B cell (primary cell): ENCODE measurements at regions of chr1 and their contacts with region 1.

Region 1: DNA sequence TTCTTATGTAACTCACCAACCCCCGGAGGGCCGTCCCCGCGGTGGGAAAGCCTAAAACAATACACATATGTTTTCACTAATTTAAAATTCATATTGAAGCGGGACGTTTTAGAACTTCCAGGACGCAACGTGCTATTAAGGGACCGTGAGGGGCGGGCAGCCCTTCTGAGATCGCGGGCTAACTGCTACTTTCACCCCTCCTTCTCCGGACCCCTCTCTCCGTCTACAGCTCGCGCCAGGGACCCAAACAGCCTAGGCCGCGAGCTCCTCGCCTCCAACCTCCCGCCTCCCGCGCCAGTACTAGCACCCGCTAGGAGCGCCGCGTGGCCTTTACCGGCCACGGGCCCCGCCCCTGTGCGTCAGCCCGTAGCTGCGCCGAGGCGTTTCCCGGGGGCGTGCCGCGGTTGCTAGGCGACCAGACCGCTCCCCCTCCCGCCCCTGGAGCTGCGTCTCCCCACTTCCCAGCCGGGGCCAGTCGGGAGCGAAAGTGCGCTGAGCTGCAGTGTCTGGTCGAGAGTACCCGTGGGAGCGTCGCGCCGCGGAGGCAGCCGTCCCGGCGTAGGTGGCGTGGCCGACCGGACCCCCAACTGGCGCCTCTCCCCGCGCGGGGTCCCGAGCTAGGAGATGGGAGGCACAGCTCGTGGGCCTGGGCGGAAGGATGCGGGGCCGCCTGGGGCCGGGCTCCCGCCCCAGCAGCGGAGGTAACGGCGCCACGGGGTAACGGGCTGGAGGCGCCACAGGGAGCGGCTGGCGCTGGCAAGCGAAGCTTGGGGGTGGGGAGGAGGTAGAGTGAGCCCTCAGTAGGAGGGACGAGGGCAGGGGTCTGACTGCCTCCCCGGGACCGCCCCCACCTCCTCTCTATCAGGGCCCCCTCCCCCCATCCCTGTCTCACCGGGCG is at the start of gene DYRK3:
- DNase-seq: peak; percentile 89
- ATAC-seq: peak; percentile 93
- H3K4me3 ChIP-seq: peak within 1 kb of the TSS; percentile 54 to 77 (median 67)
- H3K4me3 Mint-ChIP-seq: peak within 1 kb of the TSS; percentile 92
- H3K27ac ChIP-seq: no peak within 1 kb of the TSS
- H3K27ac Mint-ChIP-seq: peak within 1 kb of the TSS; percentile 74
- H3K4me1 ChIP-seq: peaks cover 17 to 22% of the 10 kb centered on the region in 2 donors
- H3K4me1 Mint-ChIP-seq: peaks cover 29% of the 10 kb centered on the region
- H3K27me3 ChIP-seq: peaks cover 0 to 11% (median 7%) of the 10 kb centered on the region in 4 experiments
- H3K27me3 Mint-ChIP-seq: peaks cover 7% of the 10 kb centered on the region
- CTCF ChIP-seq: no peak
- total RNA-seq, gene DYRK3: 0.30 and 0.80 TPM in 2 replicates

Region 2: GRCh38 chr1:206612129-206612876 is 23.0 kb before region 1 on chr1 and contains the start of gene EIF2D:
- CTCF ChIA-PET with region 1: interaction called, 35 read pairs
- POLR2A ChIA-PET with region 1: interaction called, 5 read pairs
- intact Hi-C with region 1: loop called (anchors 1 kb)
- DNase-seq: peak; percentile 96
- ATAC-seq: peak; percentile 100
- H3K4me3 ChIP-seq: peak within 1 kb of the TSS; percentile 61 to 87 (median 86)
- H3K4me3 Mint-ChIP-seq: peak within 1 kb of the TSS; percentile 93
- H3K27ac ChIP-seq: peak within 1 kb of the TSS; percentile 70 to 93
- H3K27ac Mint-ChIP-seq: peak within 1 kb of the TSS; percentile 96
- H3K4me1 ChIP-seq: peaks cover 8 to 12% of the 10 kb centered on the region in 2 donors
- H3K4me1 Mint-ChIP-seq: peaks cover 19% of the 10 kb centered on the region
- H3K27me3 ChIP-seq: no peaks in the 10 kb centered on the region
- H3K27me3 Mint-ChIP-seq: no peaks in the 10 kb centered on the region
- CTCF ChIP-seq: peak; percentile 88
- total RNA-seq, gene EIF2D: 60.6 and 62.2 TPM in 2 replicates

Region 3: DNA sequence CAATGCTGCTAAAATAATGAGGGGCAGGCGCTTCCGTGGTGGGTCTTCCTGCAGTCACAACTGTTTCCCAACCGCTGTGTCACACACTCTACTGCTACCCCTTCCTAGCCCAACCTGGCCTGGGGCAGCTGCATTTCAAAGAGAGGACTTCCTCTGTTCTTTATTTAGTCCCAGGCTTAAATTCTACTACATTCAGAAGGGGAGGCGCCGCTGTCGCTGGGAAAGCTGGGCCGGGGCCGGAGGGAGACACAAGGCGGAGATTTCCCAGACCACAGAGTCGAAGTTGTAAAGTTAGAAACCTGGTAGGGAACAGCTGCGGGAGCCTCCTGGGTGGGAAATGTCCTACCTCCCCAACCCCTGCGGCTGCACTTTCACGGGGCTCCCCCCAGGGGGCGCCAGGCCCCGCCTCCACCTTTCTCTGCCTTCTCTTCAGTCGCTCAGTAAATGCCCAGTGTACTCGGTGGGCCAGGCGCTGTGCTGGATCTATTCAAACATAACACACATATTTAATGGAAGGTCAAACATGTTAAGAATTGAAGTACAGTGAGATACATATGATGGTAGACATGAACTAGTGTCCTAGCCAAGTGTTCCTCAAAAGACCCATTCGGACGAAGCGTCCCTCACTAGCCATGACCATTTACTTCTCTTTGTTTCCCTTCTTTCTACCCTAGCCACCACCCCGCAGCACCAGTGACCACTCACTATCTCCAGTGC is 23.1 kb after region 1 on chr1:
- CTCF ChIA-PET with region 1: interaction called, 215 read pairs
- POLR2A ChIA-PET with region 1: interaction called, 3 read pairs
- intact Hi-C with region 1: no loop called
- DNase-seq: peak; percentile 72
- ATAC-seq: peak; percentile 85
- H3K4me3 ChIP-seq: peak overlapping the region in 3 of 5 experiments; percentile 8 to 51 (median 12)
- H3K4me3 Mint-ChIP-seq: peak overlapping the region; percentile 49
- H3K27ac ChIP-seq: no peak overlapping the region
- H3K27ac Mint-ChIP-seq: peak overlapping the region; percentile 1
- H3K4me1 ChIP-seq: peaks cover 16 to 17% of the 10 kb centered on the region in 2 donors
- H3K4me1 Mint-ChIP-seq: peaks cover 21% of the 10 kb centered on the region
- H3K27me3 ChIP-seq: peaks cover 0 to 34% (median 11%) of the 10 kb centered on the region in 4 experiments
- H3K27me3 Mint-ChIP-seq: peaks cover 30% of the 10 kb centered on the region
- CTCF ChIP-seq: peak; percentile 96

Region 4: DNA sequence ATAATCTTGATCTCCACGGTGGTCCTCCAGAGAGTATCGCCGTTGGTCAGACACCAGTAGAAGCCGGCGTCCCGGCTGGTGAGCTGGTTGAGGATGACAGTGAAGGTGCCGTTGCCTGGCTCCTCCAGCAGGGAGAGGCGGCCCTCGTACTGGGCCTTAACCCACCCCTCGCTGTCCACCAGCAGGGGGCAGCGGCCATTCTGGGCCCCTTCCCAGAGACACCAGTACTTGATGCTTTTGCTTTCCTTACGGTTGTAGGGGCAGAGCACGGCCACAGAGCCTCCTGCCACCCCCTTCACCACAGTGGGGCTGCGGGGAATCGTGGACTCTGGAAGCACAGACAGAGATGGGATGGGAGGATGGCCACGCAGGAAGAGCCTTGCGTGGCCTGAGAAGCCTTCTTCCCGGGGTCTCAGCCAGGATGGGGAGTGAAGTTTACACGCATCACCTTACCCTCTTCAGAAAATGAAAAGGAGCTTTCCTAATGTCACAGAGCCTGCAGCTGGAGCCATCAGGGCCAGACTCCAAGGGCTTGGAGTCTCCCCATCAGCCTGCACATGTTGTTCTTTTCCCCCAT is 300.2 kb after region 1 on chr1:
- CTCF ChIA-PET with region 1: interaction called, 37 read pairs
- POLR2A ChIA-PET with region 1: interaction called, 4 read pairs
- intact Hi-C with region 1: no loop called
- DNase-seq: peak; percentile 59
- ATAC-seq: peak; percentile 14
- H3K4me3 ChIP-seq: no peak overlapping the region
- H3K4me3 Mint-ChIP-seq: no peak overlapping the region
- H3K27ac ChIP-seq: no peak overlapping the region
- H3K27ac Mint-ChIP-seq: no peak overlapping the region
- H3K4me1 ChIP-seq: peaks cover 27 to 30% of the 10 kb centered on the region in 2 donors
- H3K4me1 Mint-ChIP-seq: peaks cover 30% of the 10 kb centered on the region
- H3K27me3 ChIP-seq: no peaks in the 10 kb centered on the region
- H3K27me3 Mint-ChIP-seq: no peaks in the 10 kb centered on the region
- CTCF ChIP-seq: peak; percentile 51

Region 5: GRCh38 chr1:207052911-207053769 is 417.8 kb after region 1 on chr1 and contains the start of gene PFKFB2:
- CTCF ChIA-PET with region 1: interaction called, 4 read pairs
- POLR2A ChIA-PET with region 1: no interaction called
- intact Hi-C with region 1: loop called (anchors 10 kb)
- DNase-seq: peak; percentile 98
- ATAC-seq: peak; percentile 87
- H3K4me3 ChIP-seq: peak within 1 kb of the TSS; percentile 53 to 92 (median 73)
- H3K4me3 Mint-ChIP-seq: peak within 1 kb of the TSS; percentile 99
- H3K27ac ChIP-seq: peak within 1 kb of the TSS; percentile 87 to 96
- H3K27ac Mint-ChIP-seq: peak within 1 kb of the TSS; percentile 99
- H3K4me1 ChIP-seq: peaks cover 39 to 42% of the 10 kb centered on the region in 2 donors
- H3K4me1 Mint-ChIP-seq: peaks cover 53% of the 10 kb centered on the region
- H3K27me3 ChIP-seq: no peaks in the 10 kb centered on the region
- H3K27me3 Mint-ChIP-seq: no peaks in the 10 kb centered on the region
- CTCF ChIP-seq: peak; percentile 10
- total RNA-seq, gene PFKFB2: 15.6 and 18.2 TPM in 2 replicates